CD8-positive, alpha-beta T cell (primary cell): ENCODE measurements at regions of chr3 and their contacts with region 1.

Region 1: DNA sequence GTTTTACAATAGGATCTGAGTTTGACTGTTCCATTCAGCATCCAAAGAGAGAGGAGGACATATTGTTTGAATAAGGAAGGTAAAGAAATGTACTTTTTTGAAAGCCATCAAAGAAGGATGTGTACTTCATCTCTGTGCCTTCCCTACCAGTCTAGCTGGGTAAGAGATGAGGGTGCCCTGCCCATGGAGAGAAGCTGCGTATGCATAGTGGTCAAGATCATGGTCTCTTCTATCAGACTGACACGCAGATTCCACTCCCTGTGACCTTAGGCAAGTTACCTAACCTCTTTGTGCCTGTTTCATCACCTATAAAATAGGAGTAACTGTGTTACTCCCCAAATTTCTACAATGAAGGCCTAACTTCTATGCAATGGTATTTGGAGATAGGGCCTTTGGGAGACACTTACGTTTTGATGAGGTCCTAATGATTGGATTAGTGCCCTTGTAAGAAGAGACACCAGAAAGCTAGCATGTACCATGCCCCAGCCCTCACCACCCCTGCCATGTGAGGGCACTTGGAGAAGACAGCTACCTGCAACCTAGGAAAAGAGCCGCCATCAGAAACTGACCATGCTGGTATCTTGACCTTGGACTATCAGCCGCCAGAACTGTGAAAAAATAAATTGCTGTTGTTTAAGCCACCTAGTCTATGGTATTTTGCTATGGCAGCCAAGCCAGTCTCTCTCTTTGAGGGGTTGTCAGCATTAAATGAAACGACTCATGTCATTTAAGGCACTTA is 4.6 kb upstream of the OSBPL11 start:
- DNase-seq: no peak
- ATAC-seq: no peak
- H3K4me3 ChIP-seq: no peak overlapping the region
- H3K4me3 Mint-ChIP-seq: no peak overlapping the region
- H3K27ac ChIP-seq: no peak overlapping the region
- H3K27ac Mint-ChIP-seq: no peak overlapping the region
- H3K4me1 ChIP-seq: peaks cover 5% of the 10 kb centered on the region
- H3K4me1 Mint-ChIP-seq: peaks cover 4% of the 10 kb centered on the region
- H3K27me3 ChIP-seq: no peaks in the 10 kb centered on the region
- H3K27me3 Mint-ChIP-seq: no peaks in the 10 kb centered on the region
- CTCF ChIP-seq: no peak

Region 2: GRCh38 chr3:125585595-125586223 is 14.2 kb before region 1 on chr3:
- CTCF ChIA-PET with region 1: interaction called, 20 read pairs
- POLR2A ChIA-PET with region 1: no interaction called
- intact Hi-C with region 1: no loop called
- DNase-seq: peak in 6 of 9 experiments; percentile 24 to 68 (median 40)
- ATAC-seq: peak; percentile 74
- H3K4me3 ChIP-seq: no peak overlapping the region
- H3K4me3 Mint-ChIP-seq: no peak overlapping the region
- H3K27ac ChIP-seq: no peak overlapping the region
- H3K27ac Mint-ChIP-seq: no peak overlapping the region
- H3K4me1 ChIP-seq: peaks cover 5% of the 10 kb centered on the region
- H3K4me1 Mint-ChIP-seq: peaks cover 23% of the 10 kb centered on the region
- H3K27me3 ChIP-seq: no peaks in the 10 kb centered on the region
- H3K27me3 Mint-ChIP-seq: no peaks in the 10 kb centered on the region
- CTCF ChIP-seq: peak; percentile 87